ENCODE measurements at regions of chr9 and their contacts with region 1.

Region 1: GRCh38 chr9:131426545-131426944 is 32.7 kb downstream of the PRRC2B start:
- DNase-seq: no peak
- ATAC-seq: no peak
- H3K4me3 Mint-ChIP-seq: no peak overlapping the region
- H3K27ac Mint-ChIP-seq: peak overlapping the region; percentile 37
- H3K4me1 Mint-ChIP-seq: peaks cover 63% of the 10 kb centered on the region
- H3K27me3 Mint-ChIP-seq: no peaks in the 10 kb centered on the region
- CTCF ChIP-seq: no peak

Region 2: DNA sequence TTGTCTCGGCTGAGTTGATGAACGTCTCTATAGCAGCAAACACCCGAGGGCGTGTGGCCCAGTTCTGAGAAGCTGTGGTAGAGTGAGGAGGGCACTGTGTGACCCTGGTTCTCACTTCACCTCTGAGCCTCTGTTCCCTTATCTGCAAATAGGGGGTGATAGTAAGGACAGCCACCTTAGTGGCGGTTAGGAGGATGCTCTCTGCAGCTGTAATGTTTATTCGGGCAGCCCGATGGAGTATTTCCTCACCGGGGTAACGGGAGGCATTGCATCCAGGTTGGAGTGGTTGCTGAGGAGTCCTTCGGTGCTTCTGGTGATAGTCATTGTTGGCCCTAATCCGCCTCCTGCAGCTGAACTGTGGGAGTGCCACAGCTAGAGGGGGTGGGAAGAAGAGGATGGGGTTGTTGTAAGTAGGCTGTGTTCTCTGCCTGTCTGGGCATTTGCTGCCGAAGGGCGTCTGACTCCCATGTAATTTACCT is 18.8 kb before region 1 on chr9:
- CTCF ChIA-PET with region 1: no interaction called
- POLR2A ChIA-PET with region 1: interaction called, 3 read pairs
- intact Hi-C with region 1: loop called (anchors 2 kb)
- DNase-seq: no peak
- ATAC-seq: peak; percentile 22
- H3K4me3 Mint-ChIP-seq: peak overlapping the region; percentile 16
- H3K27ac Mint-ChIP-seq: peak overlapping the region; percentile 24
- H3K4me1 Mint-ChIP-seq: peaks cover 88% of the 10 kb centered on the region
- H3K27me3 Mint-ChIP-seq: no peaks in the 10 kb centered on the region
- CTCF ChIP-seq: no peak